Activated T-helper 1 cell treated with anti-CD3 and anti-CD28 coated beads, Interleukin-12 subunit alpha, Interleukin-12 subunit beta, Interleukin-2, Interleukin-4 antibody, amounts not matched to agents 30 ng/mL and 10 ng/mL and 1 ng/mL, durations not matched to agents 14 hours and 24 hours and 36 hours (primary cell): ENCODE measurements at regions of chr1 and their contacts with region 1.

Region 1: GRCh38 chr1:113928941-113929749 is at the start of gene HIPK1:
- DNase-seq: peak; percentile 91
- H3K4me3 Mint-ChIP-seq: peak within 1 kb of the TSS; percentile 98
- H3K27ac Mint-ChIP-seq: peak within 1 kb of the TSS; percentile 99
- H3K4me1 Mint-ChIP-seq: peaks cover 55% of the 10 kb centered on the region
- H3K27me3 Mint-ChIP-seq: peaks cover 7% of the 10 kb centered on the region
- total RNA-seq, gene HIPK1: 100 and 101 TPM in 2 replicates

Region 2: GRCh38 chr1:112955781-112956543 is 973.2 kb before region 1 on chr1 and contains the start of gene SLC16A1:
- intact Hi-C with region 1: loop called (anchors 2 kb)
- DNase-seq: peak; percentile 90
- H3K4me3 Mint-ChIP-seq: peak within 1 kb of the TSS; percentile 90
- H3K27ac Mint-ChIP-seq: peak within 1 kb of the TSS; percentile 100
- H3K4me1 Mint-ChIP-seq: peaks cover 59% of the 10 kb centered on the region
- H3K27me3 Mint-ChIP-seq: no peaks in the 10 kb centered on the region
- total RNA-seq, gene SLC16A1: 73.6 and 77.4 TPM in 2 replicates

Region 3: DNA sequence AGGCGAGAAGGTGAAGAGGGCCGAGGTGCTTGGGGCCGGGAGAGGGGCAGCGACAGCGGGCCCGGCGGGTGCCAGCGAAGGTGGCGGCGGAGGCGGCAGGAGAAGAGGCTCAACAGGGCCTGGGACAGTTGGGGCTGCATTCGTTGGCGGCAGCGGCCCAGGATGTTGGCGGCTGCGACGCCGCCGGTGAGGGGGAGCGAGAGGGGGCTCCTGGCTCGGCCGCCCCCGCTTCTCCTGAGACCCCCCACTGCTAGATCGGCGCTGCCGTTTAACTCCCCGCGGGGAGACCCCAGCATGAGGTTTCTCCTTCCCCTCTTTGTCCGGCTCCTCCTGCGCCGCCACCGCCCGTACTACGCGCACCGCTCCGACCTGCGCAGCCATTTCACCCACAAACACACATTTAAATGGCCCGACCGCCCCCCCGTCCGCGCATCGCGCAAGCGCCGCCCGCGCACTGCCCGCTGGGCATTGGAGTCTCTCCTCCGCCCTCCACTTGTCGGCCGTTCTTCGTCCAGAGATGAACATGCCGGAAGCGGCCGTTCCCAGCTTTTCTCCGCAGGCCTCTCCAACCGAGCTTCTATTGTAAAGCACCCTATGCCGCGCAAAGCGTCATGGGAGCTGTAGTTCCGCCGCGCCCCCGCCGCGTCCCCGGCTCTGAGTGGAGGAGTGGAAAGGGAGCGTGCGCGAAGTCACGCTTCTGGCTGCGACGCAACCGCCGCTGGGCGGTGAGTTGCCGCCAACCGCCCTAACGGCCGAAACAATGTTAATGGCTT is 117.1 kb before region 1 on chr1 and contains the start of gene RSBN1:
- intact Hi-C with region 1: loop called (anchors 1 kb)
- DNase-seq: peak; percentile 99
- H3K4me3 Mint-ChIP-seq: peak within 1 kb of the TSS; percentile 96
- H3K27ac Mint-ChIP-seq: peak within 1 kb of the TSS; percentile 96
- H3K4me1 Mint-ChIP-seq: peaks cover 34% of the 10 kb centered on the region
- H3K27me3 Mint-ChIP-seq: no peaks in the 10 kb centered on the region
- total RNA-seq, gene RSBN1: 18.4 and 19.5 TPM in 2 replicates

Region 4: DNA sequence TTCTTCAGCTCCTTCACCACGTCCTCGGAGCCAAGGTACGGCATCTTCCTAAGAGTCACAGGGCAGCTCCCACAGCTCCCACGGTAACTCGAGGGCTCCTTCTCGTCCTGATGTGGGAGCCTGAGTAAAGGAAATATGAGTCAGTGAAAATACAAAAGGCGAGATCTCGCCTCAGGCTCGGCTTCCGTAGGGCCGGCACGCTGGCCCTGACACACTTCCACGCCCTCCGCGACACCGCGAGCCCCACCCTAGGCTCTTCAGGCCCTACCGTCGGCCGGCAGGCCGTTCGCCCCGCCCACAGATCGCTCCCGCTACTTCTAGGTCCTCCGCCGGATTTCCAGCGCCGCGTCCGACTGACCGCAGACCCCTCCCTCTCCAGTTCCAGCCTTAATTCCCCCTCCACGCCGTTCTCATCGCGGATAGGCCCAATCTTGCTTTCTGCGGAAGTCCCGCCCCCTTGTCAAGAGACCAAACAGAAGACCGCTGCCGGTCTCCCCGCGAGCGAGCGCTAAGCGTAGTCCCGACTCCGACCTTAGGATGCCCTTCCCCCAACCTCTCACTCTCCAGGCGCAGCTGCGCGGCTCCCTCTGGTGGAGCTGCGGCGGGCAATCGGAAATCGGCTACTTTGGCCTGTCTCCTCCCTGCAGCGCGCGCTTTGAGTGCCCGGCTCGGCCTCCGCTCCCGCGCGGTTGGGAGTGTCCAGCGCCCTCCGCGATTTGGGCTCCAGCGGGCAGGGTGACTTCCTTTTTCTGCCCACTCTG is 24.3 kb before region 1 on chr1 and contains the starts of genes AP4B1 and DCLRE1B:
- intact Hi-C with region 1: loop called (anchors 1 kb)
- DNase-seq: peak; percentile 98
- H3K4me3 Mint-ChIP-seq: peak within 1 kb of the TSS; percentile 99
- H3K27ac Mint-ChIP-seq: peak within 1 kb of the TSS; percentile 95
- H3K4me1 Mint-ChIP-seq: peaks cover 58% of the 10 kb centered on the region
- H3K27me3 Mint-ChIP-seq: no peaks in the 10 kb centered on the region
- total RNA-seq, gene AP4B1: 36.3 and 40.9 TPM in 2 replicates
- total RNA-seq, gene DCLRE1B: 20.9 and 21.2 TPM in 2 replicates

Region 5: DNA sequence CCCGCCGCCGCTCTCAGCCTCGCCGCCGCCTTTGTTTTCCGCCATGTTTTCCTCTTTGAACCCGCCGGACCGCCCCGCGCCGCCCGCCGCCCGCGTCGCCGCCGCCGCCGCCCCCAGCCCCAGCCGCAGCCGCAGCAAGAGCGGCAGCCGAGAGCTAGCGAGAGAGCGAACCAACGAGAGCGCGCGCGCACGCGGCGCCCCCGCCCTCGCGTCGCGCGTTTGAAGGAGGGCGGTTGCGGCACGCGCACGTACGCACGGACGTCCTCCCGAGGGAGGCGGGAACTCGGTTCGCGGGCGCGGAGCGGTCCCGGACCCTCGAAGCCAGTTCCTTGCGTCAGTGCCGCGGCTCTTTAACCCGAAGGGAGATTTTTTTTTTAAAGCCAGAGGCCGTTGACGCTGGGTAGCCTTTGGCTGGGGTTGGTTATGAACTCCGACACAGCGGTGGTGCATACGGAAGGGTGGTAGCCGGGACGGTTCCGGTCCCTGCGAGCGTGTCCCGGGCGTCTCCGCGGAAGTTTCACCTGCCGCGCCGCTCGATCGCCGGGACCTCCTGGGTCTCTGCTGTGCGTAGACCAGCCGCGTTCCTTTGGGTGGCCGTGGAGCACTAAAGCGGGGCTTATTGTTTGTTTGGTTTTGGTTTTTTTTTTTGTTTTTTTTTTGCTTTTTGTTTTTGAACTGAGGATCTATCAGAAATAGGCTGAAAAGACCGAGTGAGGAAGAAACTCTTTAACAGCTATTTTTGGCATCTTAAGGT is 582.1 kb after region 1 on chr1 and contains the start of gene TRIM33:
- intact Hi-C with region 1: loop called (anchors 1 kb)
- DNase-seq: peak; percentile 92
- H3K4me3 Mint-ChIP-seq: peak within 1 kb of the TSS; percentile 93
- H3K27ac Mint-ChIP-seq: peak within 1 kb of the TSS; percentile 98
- H3K4me1 Mint-ChIP-seq: peaks cover 45% of the 10 kb centered on the region
- H3K27me3 Mint-ChIP-seq: peaks cover 1% of the 10 kb centered on the region
- total RNA-seq, gene TRIM33: 39.2 and 41.7 TPM in 2 replicates

Region 6: DNA sequence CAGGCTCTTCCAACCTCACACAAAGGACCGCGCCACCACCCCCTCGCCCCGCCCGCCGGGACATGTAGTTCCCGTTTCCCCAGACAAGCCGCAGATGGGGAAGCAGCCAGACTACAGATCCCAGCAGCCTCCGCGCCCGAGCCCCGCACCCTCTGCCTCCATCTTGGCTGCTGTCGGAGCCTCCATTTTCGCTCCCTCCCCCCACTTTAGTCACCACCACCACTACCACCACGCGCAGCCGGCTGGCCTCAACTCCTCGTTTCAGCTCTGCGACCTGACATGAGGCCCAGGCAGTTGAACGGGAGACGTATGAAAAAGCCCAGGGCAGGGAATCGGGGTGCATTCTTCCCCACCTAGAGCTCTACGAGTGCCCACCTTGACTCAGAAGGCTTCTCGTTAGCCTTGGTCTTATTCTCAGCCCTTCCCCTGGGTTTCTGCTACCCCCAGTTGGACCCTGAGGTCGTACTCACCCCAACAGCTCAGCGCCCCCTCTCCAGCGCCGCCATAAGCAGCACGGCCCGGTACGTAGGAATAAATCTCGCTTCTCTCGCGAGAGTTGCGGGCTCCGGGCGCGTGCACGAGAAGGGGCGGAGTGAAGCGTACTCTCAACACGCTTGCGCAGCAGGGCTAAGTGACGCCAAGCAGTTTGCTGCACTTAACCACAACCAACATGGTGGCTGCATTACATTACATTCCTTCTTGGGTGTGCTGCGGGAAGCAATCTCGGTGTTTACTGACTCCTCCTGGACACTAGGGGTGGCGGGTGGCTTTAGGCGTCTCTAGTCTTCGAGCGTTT is 828.5 kb after region 1 on chr1 and contains the start of gene CSDE1:
- intact Hi-C with region 1: loop called (anchors 2 kb)
- DNase-seq: peak; percentile 96
- H3K4me3 Mint-ChIP-seq: peak within 1 kb of the TSS; percentile 99
- H3K27ac Mint-ChIP-seq: peak within 1 kb of the TSS; percentile 100
- H3K4me1 Mint-ChIP-seq: peaks cover 42% of the 10 kb centered on the region
- H3K27me3 Mint-ChIP-seq: no peaks in the 10 kb centered on the region
- total RNA-seq, gene CSDE1: 398 and 421 TPM in 2 replicates